ENCODE measurements at regions of chr17 and their contacts with region 1.

Region 1: DNA sequence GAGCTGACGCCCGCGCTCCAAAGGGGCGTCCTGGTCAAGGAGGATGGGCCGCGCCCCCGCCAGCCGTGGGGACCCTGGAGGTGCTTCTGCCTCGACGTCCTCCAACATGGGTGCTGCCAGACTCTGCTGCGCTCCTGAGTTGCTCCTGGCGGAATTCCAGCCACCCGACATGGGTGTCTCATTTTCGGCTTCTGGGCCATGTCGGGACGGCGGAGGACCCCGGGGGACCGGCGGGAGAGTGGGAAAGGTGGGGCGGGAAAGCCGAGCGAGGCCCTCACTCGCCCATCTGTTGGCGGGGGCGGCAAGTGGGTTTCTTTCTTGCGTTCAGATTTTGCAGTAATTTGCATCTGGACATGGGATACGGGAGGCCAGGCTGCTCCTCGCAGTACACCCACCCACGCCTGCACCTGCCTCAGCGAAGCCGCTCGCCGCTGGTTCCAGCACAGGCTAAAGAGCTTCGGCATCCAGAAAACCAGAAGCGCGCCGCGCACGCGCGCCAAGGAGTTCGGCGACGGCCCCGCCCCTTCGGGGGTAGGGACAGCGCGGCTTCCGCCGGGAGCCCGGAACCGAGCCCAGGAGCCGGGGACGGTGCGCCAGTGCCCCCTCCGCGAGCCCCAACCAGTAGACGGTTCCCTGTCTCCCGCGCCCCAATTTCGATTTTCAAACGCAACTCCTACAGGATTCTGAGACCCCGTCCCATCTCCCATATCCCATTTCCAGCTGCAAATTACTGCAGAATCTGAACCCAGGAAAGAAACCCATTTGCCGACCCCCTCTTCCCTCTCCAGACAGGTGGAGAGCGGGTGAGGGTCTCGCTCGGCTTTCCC is at the start of gene ARMC7:
- DNase-seq: peak; percentile 96 to 97 (median 96)
- ATAC-seq: peak; percentile 90
- H3K4me3 ChIP-seq: peak within 1 kb of the TSS; percentile 71
- H3K27ac ChIP-seq: peak within 1 kb of the TSS; percentile 83
- H3K4me1 ChIP-seq: peaks cover 8 to 33% of the 10 kb centered on the region in 2 experiments
- H3K27me3 ChIP-seq: no peaks in the 10 kb centered on the region
- CTCF ChIP-seq: peak in 1 of 3 experiments; percentile 24; a peak in 1 of 6 replicates
- EP300 ChIP-seq: no peak
- POLR2A ChIP-seq: peak; percentile 79
- RAD21 ChIP-seq: peak in 1 of 2 experiments; percentile 44; a peak in 3 of 4 replicates
- polyA plus RNA-seq, gene ARMC7: 1.4 to 2.8 TPM

Region 2: GRCh38 chr17:75051941-75052340 is 57.7 kb before region 1 on chr17:
- CTCF ChIA-PET with region 1: no interaction called
- POLR2A ChIA-PET with region 1: interaction called, 4 read pairs
- in situ Hi-C with region 1: no loop called
- intact Hi-C with region 1: loop called (anchors 5 kb)
- DNase-seq: peak in 1 of 4 experiments; percentile 4
- ATAC-seq: no peak
- H3K4me3 ChIP-seq: no peak overlapping the region
- H3K27ac ChIP-seq: no peak overlapping the region
- H3K4me1 ChIP-seq: peaks cover 8 to 11% of the 10 kb centered on the region in 2 experiments; a peak in 4 of 5 replicates
- H3K27me3 ChIP-seq: no peaks in the 10 kb centered on the region
- CTCF ChIP-seq: no peak
- EP300 ChIP-seq: no peak
- POLR2A ChIP-seq: no peak
- RAD21 ChIP-seq: no peak

Region 3: DNA sequence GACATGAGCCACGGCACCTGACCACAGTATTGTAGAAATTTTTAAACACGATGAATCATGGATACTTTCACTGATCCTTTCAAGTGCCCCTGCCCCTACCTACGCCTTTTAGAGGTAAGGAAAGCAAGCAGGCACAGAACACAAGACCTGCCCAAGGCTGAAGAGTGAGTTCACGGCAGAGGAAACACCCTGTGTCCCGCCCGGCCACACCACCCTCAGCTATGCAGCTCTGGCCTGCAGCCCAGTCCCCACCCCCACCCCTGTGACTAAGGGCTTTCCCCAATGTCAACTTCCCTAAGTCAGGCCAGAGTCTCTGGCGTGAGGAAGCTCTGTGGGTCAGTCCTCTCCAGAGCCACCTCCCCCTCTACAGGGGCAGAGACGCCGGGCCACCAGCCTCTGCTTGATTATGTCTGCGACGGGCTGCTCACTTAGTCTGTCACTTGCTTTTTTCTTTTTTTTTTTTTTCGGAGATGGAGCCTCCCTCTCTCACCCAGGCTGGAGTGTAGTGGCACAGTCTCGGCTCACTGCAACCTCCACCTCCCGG is 13.5 kb before region 1 on chr17:
- CTCF ChIA-PET with region 1: interaction called, 3 read pairs
- POLR2A ChIA-PET with region 1: interaction called, 10 read pairs
- in situ Hi-C with region 1: no loop called
- intact Hi-C with region 1: no loop called
- DNase-seq: peak; percentile 87 to 98 (median 92)
- ATAC-seq: peak; percentile 93
- H3K4me3 ChIP-seq: no peak overlapping the region
- H3K27ac ChIP-seq: peak overlapping the region; percentile 95
- H3K4me1 ChIP-seq: peaks cover 36 to 64% of the 10 kb centered on the region in 2 experiments
- H3K27me3 ChIP-seq: no peaks in the 10 kb centered on the region; a peak in 1 of 5 replicates
- CTCF ChIP-seq: no peak
- EP300 ChIP-seq: peak; percentile 78
- POLR2A ChIP-seq: peak; percentile 71
- RAD21 ChIP-seq: peak in 1 of 2 experiments; percentile 41; a peak in 2 of 4 replicates

Region 4: GRCh38 chr17:75154195-75155106 is 44.8 kb after region 1 on chr17 and contains the start of gene JPT1:
- CTCF ChIA-PET with region 1: no interaction called
- POLR2A ChIA-PET with region 1: interaction called, 12 read pairs
- in situ Hi-C with region 1: no loop called
- intact Hi-C with region 1: loop called (anchors 1 kb)
- DNase-seq: peak; percentile 97 to 99 (median 99)
- ATAC-seq: peak; percentile 97
- H3K4me3 ChIP-seq: peak within 1 kb of the TSS; percentile 98
- H3K27ac ChIP-seq: peak within 1 kb of the TSS; percentile 94
- H3K4me1 ChIP-seq: peaks cover 15 to 20% of the 10 kb centered on the region in 2 experiments
- H3K27me3 ChIP-seq: no peaks in the 10 kb centered on the region
- CTCF ChIP-seq: no peak
- EP300 ChIP-seq: no peak; the same call in none of the 2 replicates
- POLR2A ChIP-seq: peak; percentile 100
- RAD21 ChIP-seq: no peak
- polyA plus RNA-seq, gene JPT1: 67.8 to 77.7 TPM

Region 5: GRCh38 chr17:75205037-75205792 is 95.6 kb after region 1 on chr17 and contains the start of gene NUP85:
- CTCF ChIA-PET with region 1: interaction called, 33 read pairs
- POLR2A ChIA-PET with region 1: interaction called, 12 read pairs
- in situ Hi-C with region 1: no loop called
- intact Hi-C with region 1: loop called (anchors 1 kb)
- DNase-seq: peak; percentile 96 to 100 (median 98)
- ATAC-seq: peak; percentile 87
- H3K4me3 ChIP-seq: peak within 1 kb of the TSS; percentile 67
- H3K27ac ChIP-seq: peak within 1 kb of the TSS; percentile 99
- H3K4me1 ChIP-seq: peaks cover 0 to 12% of the 10 kb centered on the region in 2 experiments; a peak in 3 of 5 replicates
- H3K27me3 ChIP-seq: no peaks in the 10 kb centered on the region
- CTCF ChIP-seq: no peak
- EP300 ChIP-seq: no peak; the same call in 1 of the 2 replicates
- POLR2A ChIP-seq: peak; percentile 94
- RAD21 ChIP-seq: peak in 1 of 2 experiments; percentile 21; a peak in 3 of 4 replicates
- polyA plus RNA-seq, gene NUP85: 156 to 177 TPM

Measured in K562 (cell line).